Activated CD4-positive, alpha-beta T cell treated with anti-CD3 and anti-CD28 coated beads, Interleukin-2, amount 10 ng/mL, durations not matched to agents 24 days and 14 days (primary cell): ENCODE measurements at regions of chr13 and their contacts with region 1.

Region 1: DNA sequence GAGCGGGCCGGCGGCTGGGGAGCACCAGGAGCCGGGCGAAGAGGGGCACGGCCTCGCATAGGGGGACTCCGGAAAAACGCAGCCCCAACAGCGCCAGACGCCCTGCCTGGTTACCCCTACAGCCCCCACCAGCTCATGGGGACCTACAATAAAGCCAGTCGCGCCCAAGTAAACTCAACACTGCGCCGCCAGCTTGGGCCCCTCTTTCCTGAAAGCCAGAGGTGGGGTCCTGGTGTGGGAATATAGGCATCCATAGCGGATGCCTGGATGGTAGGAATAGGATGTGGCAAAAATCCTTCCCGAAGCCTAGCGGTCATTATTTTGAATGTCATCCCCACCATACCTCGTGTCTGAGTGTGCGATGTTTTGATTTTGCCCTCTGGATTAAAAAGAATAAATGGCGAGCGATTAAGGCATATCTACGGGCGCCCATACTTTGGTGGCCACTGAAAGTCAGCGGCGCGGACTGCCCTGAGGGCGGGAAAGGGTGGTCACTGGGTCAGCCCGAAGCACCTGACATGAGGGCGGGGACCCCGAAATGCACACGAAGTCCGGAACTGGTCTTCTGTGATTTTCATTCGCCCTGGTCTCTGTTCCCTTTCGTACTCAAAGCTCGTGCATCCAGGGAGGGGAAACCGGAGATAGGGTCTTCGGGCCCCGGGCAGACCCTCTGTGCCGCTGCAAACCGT is at the starts of genes NHLRC3 and PROSER1:
- DNase-seq: peak; percentile 94
- H3K4me3 Mint-ChIP-seq: peak within 1 kb of the TSS; percentile 91
- H3K27ac Mint-ChIP-seq: peak within 1 kb of the TSS; percentile 95
- H3K4me1 Mint-ChIP-seq: peaks cover 48% of the 10 kb centered on the region
- H3K27me3 Mint-ChIP-seq: no peaks in the 10 kb centered on the region
- total RNA-seq, gene NHLRC3: 18.4 and 18.8 TPM in 2 replicates
- total RNA-seq, gene PROSER1: 86.6 and 89.8 TPM in 2 replicates

Region 2: DNA sequence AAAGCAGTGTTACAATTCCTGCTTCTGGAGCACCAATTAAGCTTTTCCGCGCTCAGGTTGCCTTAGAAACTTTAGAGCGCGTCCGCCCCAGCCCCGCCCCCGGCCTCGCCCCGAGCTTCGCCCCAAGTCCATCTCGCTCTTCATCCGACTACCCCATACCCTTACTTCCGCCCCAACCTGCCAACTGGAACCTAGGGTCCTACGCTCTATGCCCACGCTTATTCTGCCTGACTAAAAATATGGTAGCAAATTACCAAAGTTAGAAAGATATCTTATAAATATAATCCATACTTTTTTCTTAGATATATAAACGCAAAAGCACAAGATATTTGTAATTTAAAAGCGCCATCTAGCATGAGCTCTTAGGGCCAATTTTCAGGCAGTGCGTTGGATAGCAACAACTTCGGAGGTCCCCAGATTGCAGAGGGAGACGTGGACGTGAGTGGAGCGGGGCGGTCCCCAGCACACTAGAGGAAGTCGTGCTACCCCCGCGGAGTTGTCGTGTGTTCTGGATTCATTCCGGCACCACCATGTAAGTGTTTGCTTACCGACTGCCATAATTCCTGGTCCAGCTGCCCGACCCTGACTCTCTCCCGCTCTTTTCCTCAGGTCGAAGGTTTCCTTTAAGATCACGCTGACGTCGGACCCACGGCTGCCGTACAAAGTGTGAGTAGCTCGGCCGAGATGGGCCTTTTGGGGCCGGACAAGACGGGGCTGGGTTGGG is 688.5 kb before region 1 on chr13 and contains the start of gene UFM1:
- intact Hi-C with region 1: loop called (anchors 5 kb)
- DNase-seq: peak; percentile 95
- H3K4me3 Mint-ChIP-seq: peak within 1 kb of the TSS; percentile 99
- H3K27ac Mint-ChIP-seq: peak within 1 kb of the TSS; percentile 99
- H3K4me1 Mint-ChIP-seq: peaks cover 34% of the 10 kb centered on the region
- H3K27me3 Mint-ChIP-seq: no peaks in the 10 kb centered on the region
- total RNA-seq, gene UFM1: 63.5 and 69.4 TPM in 2 replicates

Region 3: GRCh38 chr13:38819053-38819452 is 219.0 kb before region 1 on chr13:
- intact Hi-C with region 1: no loop called
- DNase-seq: no peak
- H3K4me3 Mint-ChIP-seq: no peak overlapping the region
- H3K27ac Mint-ChIP-seq: no peak overlapping the region
- H3K4me1 Mint-ChIP-seq: no peaks in the 10 kb centered on the region
- H3K27me3 Mint-ChIP-seq: no peaks in the 10 kb centered on the region

Region 4: DNA sequence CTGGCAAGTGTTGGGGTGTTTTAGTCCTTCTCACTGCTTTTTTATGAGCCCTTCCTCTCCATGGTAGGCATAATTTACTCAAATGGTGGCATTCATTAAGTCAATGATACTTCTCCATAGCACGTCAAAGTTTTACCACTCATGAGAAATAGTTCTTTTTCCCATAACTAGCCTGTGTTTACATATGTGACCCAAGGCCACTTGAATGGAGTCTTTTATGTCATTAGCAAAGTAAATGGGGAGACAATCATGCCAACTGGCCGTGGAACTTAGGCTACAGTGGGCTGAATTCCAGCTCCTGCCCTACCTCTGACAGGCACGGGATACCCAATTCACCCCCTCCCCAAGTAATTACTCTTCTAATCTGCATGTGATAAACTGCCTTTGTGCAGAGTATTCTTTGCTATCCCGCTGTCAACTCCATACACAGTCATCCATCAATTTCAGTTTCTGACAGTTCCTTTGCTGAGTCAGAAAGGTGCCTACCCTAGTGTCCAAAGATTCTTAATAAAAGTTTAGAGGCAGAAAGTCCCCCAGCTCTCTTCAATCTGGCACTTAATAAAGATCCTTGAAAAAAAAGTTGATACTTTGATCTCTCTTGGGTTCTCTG is 17.1 kb before region 1 on chr13:
- intact Hi-C with region 1: loop called (anchors 2 kb)
- DNase-seq: no peak
- H3K4me3 Mint-ChIP-seq: no peak overlapping the region
- H3K27ac Mint-ChIP-seq: no peak overlapping the region
- H3K4me1 Mint-ChIP-seq: peaks cover 11% of the 10 kb centered on the region
- H3K27me3 Mint-ChIP-seq: no peaks in the 10 kb centered on the region

Region 5: DNA sequence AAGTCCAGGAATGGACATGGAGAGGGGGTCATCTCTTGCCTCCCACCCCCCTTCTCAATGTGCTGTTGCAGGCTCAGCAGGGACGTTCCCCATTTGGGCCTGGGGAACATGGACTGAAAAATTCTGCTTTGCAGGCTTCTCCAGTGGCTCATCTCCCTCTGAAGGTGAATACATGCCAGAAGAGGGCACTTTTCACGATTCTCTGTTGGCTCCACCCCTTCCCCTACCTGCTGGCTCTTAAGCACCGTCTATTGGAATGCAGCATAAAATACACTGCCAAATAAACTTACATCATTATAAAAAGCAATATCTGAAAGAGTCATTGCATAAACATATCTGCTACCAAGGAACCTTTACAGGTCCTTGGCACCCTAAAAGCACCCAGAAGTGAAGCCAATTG is 36.0 kb after region 1 on chr13:
- intact Hi-C with region 1: no loop called
- DNase-seq: no peak
- H3K4me3 Mint-ChIP-seq: no peak overlapping the region
- H3K27ac Mint-ChIP-seq: no peak overlapping the region
- H3K4me1 Mint-ChIP-seq: no peaks in the 10 kb centered on the region
- H3K27me3 Mint-ChIP-seq: peaks cover 37% of the 10 kb centered on the region

Region 6: GRCh38 chr13:39602614-39603366 is 564.8 kb after region 1 on chr13 and contains the start of gene LHFPL6:
- intact Hi-C with region 1: loop called (anchors 2 kb)
- DNase-seq: peak; percentile 91
- H3K4me3 Mint-ChIP-seq: peak within 1 kb of the TSS; percentile 86
- H3K27ac Mint-ChIP-seq: peak within 1 kb of the TSS; percentile 49
- H3K4me1 Mint-ChIP-seq: peaks cover 14% of the 10 kb centered on the region
- H3K27me3 Mint-ChIP-seq: peaks cover 65% of the 10 kb centered on the region
- total RNA-seq, gene LHFPL6: 4.8 TPM in 2 replicates

Region 7: GRCh38 chr13:39655569-39656324 is 617.7 kb after region 1 on chr13 and contains the start of gene COG6:
- intact Hi-C with region 1: loop called (anchors 2 kb)
- DNase-seq: peak; percentile 99
- H3K4me3 Mint-ChIP-seq: peak within 1 kb of the TSS; percentile 92
- H3K27ac Mint-ChIP-seq: peak within 1 kb of the TSS; percentile 92
- H3K4me1 Mint-ChIP-seq: peaks cover 21% of the 10 kb centered on the region
- H3K27me3 Mint-ChIP-seq: peaks cover 11% of the 10 kb centered on the region
- total RNA-seq, gene COG6: 24.3 and 30.3 TPM in 2 replicates